Activated CD4-positive, alpha-beta T cell treated with anti-CD3 and anti-CD28 coated beads for 36 hours (primary cell): ENCODE measurements at regions of chr19 and their contacts with region 1.

Region 1: DNA sequence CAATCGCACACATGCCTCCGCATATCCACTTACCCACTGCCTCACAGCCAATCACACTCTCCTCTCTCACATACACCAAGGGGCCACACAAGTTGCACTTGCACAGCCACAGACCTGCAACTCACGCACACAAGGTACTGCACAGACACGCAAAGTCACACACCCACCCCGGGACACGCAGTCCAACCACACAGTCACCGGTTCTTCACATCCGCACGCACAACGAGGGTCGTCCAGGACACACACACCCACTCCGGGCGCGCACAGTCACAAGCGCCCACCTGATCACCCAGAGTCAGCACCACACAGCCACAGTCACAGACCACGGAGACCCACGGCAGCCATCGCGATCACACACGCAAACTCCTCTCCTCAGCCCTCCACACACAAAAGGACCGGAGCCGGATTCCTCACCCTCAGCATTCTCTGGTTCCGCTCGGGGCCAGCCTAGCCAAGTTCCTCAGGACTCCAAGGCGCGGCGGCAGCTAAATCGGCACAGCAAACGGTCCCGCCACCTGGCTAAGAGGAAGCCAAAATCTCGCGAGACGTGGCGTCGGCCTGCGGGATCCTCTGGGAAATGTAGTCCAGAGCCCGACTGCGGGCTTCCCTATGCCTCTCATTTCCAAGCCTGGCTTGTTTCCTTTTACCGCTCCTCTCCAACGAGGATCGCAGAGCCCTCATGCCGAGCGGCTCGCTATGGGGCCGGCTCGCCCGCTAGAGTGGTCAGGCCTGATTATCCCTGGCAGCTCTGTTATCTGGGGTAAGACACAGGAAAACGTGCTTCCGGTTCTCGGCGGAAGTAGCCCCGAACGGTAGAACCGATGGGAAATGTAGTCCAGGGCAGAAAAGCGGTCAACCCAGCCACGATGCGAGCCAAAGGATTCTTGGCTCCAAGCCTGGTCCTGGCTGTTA is at the start of gene ZNF850:
- DNase-seq: peak; percentile 97
- ATAC-seq: peak; percentile 92
- H3K4me3 Mint-ChIP-seq: peak within 1 kb of the TSS; percentile 99
- H3K27ac Mint-ChIP-seq: peak within 1 kb of the TSS; percentile 97
- H3K4me1 Mint-ChIP-seq: peaks cover 20% of the 10 kb centered on the region
- H3K27me3 Mint-ChIP-seq: no peaks in the 10 kb centered on the region
- total RNA-seq, gene ZNF850: 7.0 to 10.7 TPM

Region 2: DNA sequence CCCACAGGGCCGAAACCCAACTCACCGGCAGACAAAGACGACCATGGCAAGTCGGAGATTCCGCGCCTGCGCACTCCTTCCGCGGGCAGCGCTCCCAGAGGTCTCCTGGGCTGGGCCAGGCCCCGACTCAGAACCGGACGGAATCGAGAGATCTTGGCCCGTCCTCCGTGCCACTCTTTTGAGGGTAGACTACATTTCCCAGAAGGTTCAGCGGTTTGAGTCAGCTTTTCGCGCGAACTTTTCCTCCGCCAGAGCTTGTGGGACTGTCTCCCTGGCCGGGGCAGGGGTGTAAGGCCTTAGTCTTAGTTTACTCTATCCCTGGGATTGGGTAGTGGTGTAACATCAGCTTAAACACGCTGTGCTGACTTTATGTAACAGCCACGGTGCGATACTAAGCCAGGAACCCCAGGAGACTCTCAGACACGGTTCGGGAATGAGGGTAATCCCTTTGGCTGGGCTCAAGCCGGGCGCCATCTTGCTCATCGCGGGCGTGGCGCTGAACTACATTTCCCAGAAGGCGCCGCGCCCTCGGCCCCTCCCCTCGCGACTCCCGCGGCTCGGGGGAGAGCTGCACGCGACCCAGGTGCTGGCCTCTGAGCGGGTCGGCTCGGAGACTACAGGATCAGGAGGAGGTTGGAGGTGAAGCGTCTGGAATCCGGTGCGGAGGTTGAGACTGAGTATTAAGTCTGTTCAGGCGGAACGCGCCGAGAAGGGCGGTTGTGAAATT is 244.2 kb before region 1 on chr19 and contains the start of gene ZNF260:
- CTCF ChIA-PET with region 1: no interaction called
- POLR2A ChIA-PET with region 1: no interaction called
- intact Hi-C with region 1: loop called (anchors 1 to 2 kb)
- DNase-seq: peak; percentile 97
- ATAC-seq: peak; percentile 91
- H3K4me3 Mint-ChIP-seq: peak within 1 kb of the TSS; percentile 87
- H3K27ac Mint-ChIP-seq: peak within 1 kb of the TSS; percentile 96
- H3K4me1 Mint-ChIP-seq: peaks cover 14% of the 10 kb centered on the region
- H3K27me3 Mint-ChIP-seq: no peaks in the 10 kb centered on the region
- total RNA-seq, gene ZNF260: 5.7 to 8.2 TPM

Region 3: DNA sequence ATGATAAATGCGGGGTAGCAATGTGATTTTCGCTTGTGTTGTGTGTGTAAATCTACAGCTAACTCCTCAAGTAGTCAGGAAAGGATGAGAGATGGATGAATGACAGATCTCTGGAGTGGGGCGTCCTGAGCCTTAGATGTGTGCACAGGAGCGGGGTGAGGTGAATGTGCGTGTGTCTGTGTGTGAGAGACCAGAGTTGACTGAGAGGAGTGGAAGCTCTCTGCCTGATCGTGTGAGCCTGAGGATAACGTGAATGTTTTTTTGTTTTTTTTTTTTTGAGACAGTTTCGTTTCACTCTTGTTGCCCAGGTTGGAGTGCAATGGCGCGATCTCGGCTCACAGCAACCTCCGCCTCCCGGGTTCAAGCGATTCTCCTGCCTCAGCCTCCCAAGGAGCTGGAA is 106.7 kb before region 1 on chr19:
- CTCF ChIA-PET with region 1: no interaction called
- POLR2A ChIA-PET with region 1: no interaction called
- intact Hi-C with region 1: loop called (anchors 1 kb)
- DNase-seq: no peak
- ATAC-seq: no peak
- H3K4me3 Mint-ChIP-seq: peak overlapping the region; percentile 98
- H3K27ac Mint-ChIP-seq: peak overlapping the region; percentile 99
- H3K4me1 Mint-ChIP-seq: peaks cover 26% of the 10 kb centered on the region
- H3K27me3 Mint-ChIP-seq: no peaks in the 10 kb centered on the region

Region 4: DNA sequence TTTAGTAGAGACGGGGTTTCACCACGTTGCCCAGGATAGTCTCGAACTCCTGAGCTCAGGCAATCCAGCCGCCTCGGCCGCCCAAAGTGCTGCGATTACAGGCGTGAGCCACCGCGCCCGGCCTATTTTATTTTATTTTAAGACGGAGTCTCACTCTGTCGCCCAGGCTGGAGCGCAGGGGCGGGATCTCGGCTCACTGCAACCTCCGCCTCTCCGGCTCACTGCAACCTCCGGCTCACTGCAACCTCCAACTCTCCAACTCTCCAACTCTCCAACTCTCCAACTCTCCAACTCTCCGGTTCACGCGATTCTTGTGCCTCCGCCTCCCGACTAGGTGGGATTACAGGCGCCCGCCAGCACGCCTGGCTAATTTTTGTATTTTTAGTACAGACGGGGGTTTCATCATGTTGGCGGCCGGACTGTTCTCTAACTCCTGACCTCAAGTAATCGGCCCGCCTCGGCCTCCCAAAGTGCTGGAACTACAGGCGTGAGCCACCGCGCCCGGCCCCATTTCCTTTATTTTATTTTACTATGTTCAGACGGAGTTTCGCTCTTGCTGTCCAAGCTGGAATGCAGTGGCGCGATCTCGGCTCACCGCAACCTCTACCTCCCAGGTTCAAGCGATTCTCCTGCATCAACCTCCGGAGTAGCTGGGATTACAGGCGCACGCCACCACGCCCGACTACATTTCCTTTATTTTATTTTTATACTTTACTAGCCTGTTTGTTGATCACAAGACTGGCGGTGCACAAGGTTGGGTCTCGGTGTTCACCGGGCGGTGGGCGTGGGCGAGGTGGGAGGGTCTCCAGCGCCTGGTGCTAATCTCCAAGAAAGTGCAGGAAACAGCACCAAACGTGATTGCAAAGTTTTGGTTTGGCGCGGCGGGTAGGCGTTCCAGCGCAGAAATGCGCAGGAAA is 23.8 kb after region 1 on chr19:
- CTCF ChIA-PET with region 1: no interaction called
- POLR2A ChIA-PET with region 1: no interaction called
- intact Hi-C with region 1: loop called (anchors 1 kb)
- DNase-seq: no peak
- ATAC-seq: no peak
- H3K4me3 Mint-ChIP-seq: peak overlapping the region; percentile 83
- H3K27ac Mint-ChIP-seq: peak overlapping the region; percentile 92
- H3K4me1 Mint-ChIP-seq: peaks cover 14% of the 10 kb centered on the region
- H3K27me3 Mint-ChIP-seq: peaks cover 4% of the 10 kb centered on the region

Region 5: DNA sequence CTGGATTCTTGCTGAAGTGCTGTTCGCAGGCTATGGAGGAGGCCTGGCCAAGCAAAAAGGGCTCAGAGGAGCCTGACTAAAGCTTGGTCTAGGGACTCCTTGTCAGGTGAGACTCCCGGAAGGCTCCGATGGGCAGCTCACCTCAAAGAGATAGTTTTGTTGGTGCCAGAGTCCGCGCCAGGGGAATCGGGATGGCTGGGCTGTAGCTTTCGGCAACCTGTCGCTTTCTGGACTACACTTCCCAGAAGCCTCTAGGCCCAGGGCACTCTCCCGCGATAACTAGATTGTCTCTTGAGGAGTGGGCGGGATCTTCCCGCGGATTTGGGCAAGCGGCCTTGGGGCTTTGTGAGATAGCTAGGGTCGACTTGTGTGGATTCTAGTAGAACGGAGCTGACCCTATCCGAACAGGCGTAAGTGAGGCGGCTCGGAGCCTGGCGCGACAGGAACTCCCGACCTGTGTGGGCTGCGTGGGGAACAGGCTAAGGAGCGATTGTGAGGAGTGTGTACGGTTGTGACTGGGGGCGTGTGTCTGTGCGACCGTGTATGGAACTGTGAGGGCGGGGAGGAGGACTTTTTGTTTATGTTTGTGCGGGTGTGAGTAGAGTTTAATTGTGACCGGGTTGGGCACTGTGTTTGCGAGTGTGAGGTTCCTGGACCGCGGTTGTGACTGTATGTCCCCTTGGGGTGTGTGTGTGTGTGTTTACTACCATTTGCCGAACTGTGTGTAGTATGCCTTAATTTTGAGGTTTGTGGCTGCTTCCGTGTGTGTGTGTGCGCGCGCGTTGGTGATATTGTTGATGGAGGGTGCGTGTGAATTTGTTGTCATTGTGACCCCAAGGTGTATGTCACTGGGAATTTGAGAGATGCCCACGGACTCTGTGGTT is 78.2 kb after region 1 on chr19 and contains the start of gene ZNF345:
- CTCF ChIA-PET with region 1: no interaction called
- POLR2A ChIA-PET with region 1: interaction called, 5 read pairs
- intact Hi-C with region 1: loop called (anchors 1 kb)
- DNase-seq: peak; percentile 91
- ATAC-seq: peak; percentile 82
- H3K4me3 Mint-ChIP-seq: no peak within 1 kb of the TSS
- H3K27ac Mint-ChIP-seq: no peak within 1 kb of the TSS
- H3K4me1 Mint-ChIP-seq: peaks cover 10% of the 10 kb centered on the region
- H3K27me3 Mint-ChIP-seq: no peaks in the 10 kb centered on the region
- total RNA-seq, gene ZNF345: 3.5 to 4.6 TPM

Region 6: GRCh38 chr19:37059142-37059541 is 286.6 kb after region 1 on chr19:
- CTCF ChIA-PET with region 1: no interaction called
- POLR2A ChIA-PET with region 1: no interaction called
- intact Hi-C with region 1: no loop called
- DNase-seq: no peak
- ATAC-seq: no peak
- H3K4me3 Mint-ChIP-seq: no peak overlapping the region
- H3K27ac Mint-ChIP-seq: no peak overlapping the region
- H3K4me1 Mint-ChIP-seq: no peaks in the 10 kb centered on the region
- H3K27me3 Mint-ChIP-seq: no peaks in the 10 kb centered on the region

Region 7: GRCh38 chr19:37309834-37310575 is 537.4 kb after region 1 on chr19:
- CTCF ChIA-PET with region 1: no interaction called
- POLR2A ChIA-PET with region 1: no interaction called
- intact Hi-C with region 1: loop called in 1 of 2 experiments (anchors 10 kb)
- DNase-seq: peak; percentile 56
- ATAC-seq: no peak
- H3K4me3 Mint-ChIP-seq: no peak overlapping the region
- H3K27ac Mint-ChIP-seq: no peak overlapping the region
- H3K4me1 Mint-ChIP-seq: peaks cover 17% of the 10 kb centered on the region
- H3K27me3 Mint-ChIP-seq: no peaks in the 10 kb centered on the region